ENCODE measurements at regions of chr12 and their contacts with region 1.

Region 1: DNA sequence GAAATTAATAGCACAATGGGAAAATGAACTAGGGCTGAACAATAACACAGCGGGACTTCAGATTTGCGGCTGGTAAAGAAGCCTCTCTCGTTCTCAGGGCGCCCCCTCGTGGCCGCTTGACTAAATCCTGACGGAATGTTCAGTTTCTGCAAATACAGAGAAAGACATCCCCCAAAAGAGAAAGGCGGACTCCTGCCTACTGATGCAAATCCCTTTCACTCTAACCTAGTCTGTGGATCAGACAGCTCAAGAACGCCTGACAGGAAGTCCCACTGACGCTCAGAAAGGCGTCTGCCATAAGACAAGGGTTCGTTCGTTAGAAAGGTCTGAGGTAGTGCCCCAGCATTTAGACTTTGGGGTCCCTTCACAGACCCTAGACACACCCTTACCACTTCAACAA is 2.5 kb downstream of the NUAK1 start:
- DNase-seq: no peak
- H3K4me3 ChIP-seq: peak overlapping the region; percentile 77 to 97
- H3K27ac ChIP-seq: peak overlapping the region; percentile 94
- H3K4me1 ChIP-seq: peaks cover 61% of the 10 kb centered on the region
- H3K27me3 ChIP-seq: no peaks in the 10 kb centered on the region
- CTCF ChIP-seq: peak; percentile 63 to 84 (median 76)
- POLR2A ChIP-seq: peak in 1 of 2 donors; percentile 52

Region 2: GRCh38 chr12:105420659-105421240 is 715.5 kb before region 1 on chr12:
- intact Hi-C with region 1: loop called (anchors 5 kb)
- DNase-seq: no peak
- H3K4me3 ChIP-seq: no peak overlapping the region
- H3K27ac ChIP-seq: no peak overlapping the region
- H3K4me1 ChIP-seq: no peaks in the 10 kb centered on the region
- H3K27me3 ChIP-seq: no peaks in the 10 kb centered on the region
- CTCF ChIP-seq: peak; percentile 83 to 93 (median 87)
- POLR2A ChIP-seq: no peak

Region 3: GRCh38 chr12:105705765-105706164 is 430.5 kb before region 1 on chr12:
- intact Hi-C with region 1: loop called (anchors 5 kb)
- DNase-seq: no peak
- H3K4me3 ChIP-seq: no peak overlapping the region
- H3K27ac ChIP-seq: no peak overlapping the region
- H3K4me1 ChIP-seq: peaks cover 10% of the 10 kb centered on the region
- H3K27me3 ChIP-seq: no peaks in the 10 kb centered on the region
- CTCF ChIP-seq: peak in 2 of 3 experiments; percentile 37 to 58
- POLR2A ChIP-seq: no peak

Region 4: GRCh38 chr12:106551410-106551809 is 415.1 kb after region 1 on chr12:
- intact Hi-C with region 1: no loop called
- DNase-seq: no peak
- H3K4me3 ChIP-seq: no peak overlapping the region
- H3K27ac ChIP-seq: no peak overlapping the region
- H3K4me1 ChIP-seq: no peaks in the 10 kb centered on the region
- H3K27me3 ChIP-seq: no peaks in the 10 kb centered on the region
- CTCF ChIP-seq: no peak
- POLR2A ChIP-seq: no peak

Region 5: DNA sequence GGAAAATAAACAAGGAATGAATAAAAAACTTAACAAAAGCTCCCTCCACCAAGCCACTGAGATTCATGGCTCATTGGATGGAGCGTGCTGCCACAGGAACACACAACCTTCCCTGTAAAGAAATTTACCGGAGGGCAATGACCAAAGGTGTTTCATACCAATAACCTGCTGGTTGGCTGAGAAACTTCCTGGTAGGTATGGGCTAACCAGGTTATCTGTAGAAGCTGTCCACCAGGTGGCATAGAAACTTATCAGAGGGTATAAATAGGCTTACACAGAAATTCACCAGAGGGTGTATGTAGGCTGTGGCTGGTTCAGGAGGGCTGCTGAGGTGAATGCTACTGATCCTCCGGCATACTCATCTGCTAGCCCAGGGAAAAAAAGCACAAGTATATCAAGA is 877.8 kb after region 1 on chr12:
- intact Hi-C with region 1: no loop called
- DNase-seq: no peak
- H3K4me3 ChIP-seq: no peak overlapping the region
- H3K27ac ChIP-seq: no peak overlapping the region
- H3K4me1 ChIP-seq: no peaks in the 10 kb centered on the region
- H3K27me3 ChIP-seq: no peaks in the 10 kb centered on the region
- CTCF ChIP-seq: no peak
- POLR2A ChIP-seq: no peak